Heart left ventricle (tissue), 16 donors: ENCODE measurements at regions of chr12 and their contacts with region 1.

Region 1: DNA sequence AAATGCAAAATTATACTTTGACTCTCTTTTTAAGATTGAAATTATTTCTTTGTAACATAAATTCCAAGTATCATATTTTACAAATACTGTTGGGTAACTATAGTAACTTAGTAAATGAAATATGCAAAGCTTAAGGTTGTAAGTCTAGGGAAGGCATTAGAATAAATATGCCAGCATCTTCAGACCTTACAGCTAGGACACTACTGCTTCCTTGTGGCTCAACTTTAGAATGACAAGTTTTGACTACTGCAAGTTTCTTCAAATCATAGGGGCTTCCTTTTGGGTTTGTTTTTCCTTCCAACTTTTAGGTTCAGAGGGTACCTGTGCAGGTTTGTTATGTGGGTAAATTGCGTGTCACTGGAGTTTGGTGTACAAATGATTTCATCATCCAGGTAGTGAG is 17.7 kb upstream of the ANP32D start:
- DNase-seq: no peak
- ATAC-seq: peak in 1 of 4 donors; percentile 52
- H3K4me3 ChIP-seq: no peak overlapping the region
- H3K27ac ChIP-seq: no peak overlapping the region
- H3K4me1 ChIP-seq: peaks cover 0 to 4% (median 0%) of the 10 kb centered on the region in 12 donors
- H3K27me3 ChIP-seq: no peaks in the 10 kb centered on the region
- CTCF ChIP-seq: peak in 11 of 12 donors; percentile 30 to 72 (median 62)
- POLR2A ChIP-seq: no peak

Region 2: GRCh38 chr12:48084066-48084465 is 370.6 kb before region 1 on chr12:
- intact Hi-C with region 1: loop called in 1 of 10 experiments (anchors 5 kb)
- DNase-seq: no peak
- ATAC-seq: no peak
- H3K4me3 ChIP-seq: no peak overlapping the region
- H3K27ac ChIP-seq: no peak overlapping the region
- H3K4me1 ChIP-seq: no peaks in the 10 kb centered on the region
- H3K27me3 ChIP-seq: no peaks in the 10 kb centered on the region
- CTCF ChIP-seq: peak in 10 of 12 donors; percentile 16 to 54 (median 42)
- POLR2A ChIP-seq: no peak

Region 3: DNA sequence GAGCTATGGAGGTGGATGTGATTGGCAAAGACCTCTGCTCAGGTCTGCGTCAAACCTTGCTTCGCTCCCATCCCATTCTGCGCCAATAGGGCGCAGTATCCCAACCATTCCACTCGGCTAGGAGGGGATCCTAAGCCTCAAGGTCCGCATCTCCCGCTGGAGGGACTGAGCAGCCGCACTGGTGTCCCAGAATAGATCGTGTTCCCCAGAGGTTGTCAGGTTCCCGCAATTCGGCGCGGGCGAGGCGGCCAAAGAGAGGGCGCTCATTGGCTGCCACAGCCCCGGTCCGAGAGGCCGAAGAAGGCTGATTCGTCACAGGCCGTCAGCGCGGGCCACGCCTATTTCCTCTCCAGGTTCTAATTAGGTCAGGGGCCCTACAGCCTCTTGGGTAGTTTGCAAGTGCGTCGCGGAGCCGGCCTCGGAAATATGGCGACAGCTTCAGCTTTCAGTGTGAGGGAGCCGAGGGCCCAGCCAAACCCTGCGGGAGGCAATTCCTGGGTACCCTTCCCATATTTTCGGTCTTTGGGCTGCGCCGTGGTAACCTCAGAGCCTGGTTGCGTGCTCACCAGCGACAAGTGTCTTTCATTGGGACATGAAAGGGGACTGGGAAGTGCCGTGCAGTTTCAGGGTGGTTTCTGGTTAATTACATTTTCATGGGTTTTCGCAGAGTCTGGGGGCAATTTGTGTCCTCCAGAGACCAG is 256.5 kb before region 1 on chr12:
- intact Hi-C with region 1: loop called in 1 of 10 experiments (anchors 10 kb)
- DNase-seq: peak; percentile 98 to 99 (median 99)
- ATAC-seq: peak; percentile 98 to 100 (median 99)
- H3K4me3 ChIP-seq: peak overlapping the region; percentile 60 to 92 (median 78)
- H3K27ac ChIP-seq: peak overlapping the region; percentile 89 to 100 (median 98)
- H3K4me1 ChIP-seq: peaks cover 0 to 38% (median 16%) of the 10 kb centered on the region in 12 donors
- H3K27me3 ChIP-seq: no peaks in the 10 kb centered on the region
- CTCF ChIP-seq: no peak
- POLR2A ChIP-seq: peak; percentile 61 to 99

Region 4: DNA sequence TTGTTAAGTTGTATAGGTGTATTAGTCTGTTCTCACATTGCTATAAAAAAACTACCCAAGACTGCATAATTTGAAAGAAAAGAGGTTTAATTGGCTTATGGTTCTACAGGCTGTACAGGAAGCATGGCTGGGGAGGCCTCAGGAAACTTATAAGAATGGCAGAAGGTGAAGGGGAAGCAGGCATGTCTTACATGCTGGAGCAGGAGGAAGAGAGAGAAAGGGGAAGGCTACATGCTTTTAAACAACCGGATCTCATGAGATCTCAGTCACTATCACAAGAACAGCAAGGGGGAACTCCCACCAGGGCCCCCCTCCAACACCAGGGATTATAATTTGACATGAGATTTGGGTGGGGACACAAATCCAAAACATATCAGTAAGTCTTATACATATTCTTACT is 191.1 kb before region 1 on chr12:
- intact Hi-C with region 1: loop called in 3 of 10 experiments (anchors 10 kb)
- DNase-seq: no peak
- ATAC-seq: no peak
- H3K4me3 ChIP-seq: no peak overlapping the region
- H3K27ac ChIP-seq: no peak overlapping the region
- H3K4me1 ChIP-seq: no peaks in the 10 kb centered on the region
- H3K27me3 ChIP-seq: no peaks in the 10 kb centered on the region
- CTCF ChIP-seq: no peak
- POLR2A ChIP-seq: no peak

Region 5: DNA sequence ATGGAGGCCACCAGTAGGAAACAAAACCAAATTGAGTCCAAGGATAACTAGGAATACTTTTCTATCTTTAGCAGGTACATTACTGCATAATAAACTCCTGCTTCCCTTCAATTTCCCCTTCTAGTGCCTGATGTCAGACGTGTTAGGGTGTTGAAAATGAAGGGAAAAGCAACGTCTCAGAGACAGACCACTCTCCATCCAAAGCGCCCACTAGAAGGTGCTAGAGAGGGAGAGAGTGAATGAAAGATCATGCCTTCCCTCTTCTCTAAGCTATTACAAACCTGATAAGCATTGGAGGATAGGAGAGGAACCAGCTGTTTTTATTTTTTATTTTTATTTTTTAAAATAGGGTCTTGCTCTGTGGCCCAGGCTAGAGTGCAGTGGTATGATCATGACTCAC is 168.0 kb before region 1 on chr12:
- intact Hi-C with region 1: loop called in 3 of 10 experiments (anchors 5 to 10 kb)
- DNase-seq: no peak
- ATAC-seq: no peak
- H3K4me3 ChIP-seq: no peak overlapping the region
- H3K27ac ChIP-seq: no peak overlapping the region
- H3K4me1 ChIP-seq: peaks cover 0 to 10% (median 0%) of the 10 kb centered on the region in 12 donors
- H3K27me3 ChIP-seq: peaks cover 0 to 4% (median 0%) of the 10 kb centered on the region in 9 donors
- CTCF ChIP-seq: peak in 11 of 12 donors; percentile 14 to 56 (median 39)
- POLR2A ChIP-seq: no peak

Region 6: GRCh38 chr12:48296586-48297282 is 157.9 kb before region 1 on chr12:
- intact Hi-C with region 1: loop called in 1 of 10 experiments (anchors 10 kb)
- DNase-seq: peak; percentile 71 to 86 (median 83)
- ATAC-seq: peak; percentile 97 to 100 (median 100)
- H3K4me3 ChIP-seq: peak overlapping the region in 11 of 12 donors; percentile 23 to 68 (median 58)
- H3K27ac ChIP-seq: peak overlapping the region in 5 of 12 donors; percentile 1 to 59 (median 42)
- H3K4me1 ChIP-seq: peaks cover 0 to 8% (median 0%) of the 10 kb centered on the region in 12 donors
- H3K27me3 ChIP-seq: no peaks in the 10 kb centered on the region
- CTCF ChIP-seq: no peak
- POLR2A ChIP-seq: peak in 1 of 2 donors; percentile 48